WTC11 (cell line): ENCODE measurements at regions of chr20 and their contacts with region 1.

Region 1: DNA sequence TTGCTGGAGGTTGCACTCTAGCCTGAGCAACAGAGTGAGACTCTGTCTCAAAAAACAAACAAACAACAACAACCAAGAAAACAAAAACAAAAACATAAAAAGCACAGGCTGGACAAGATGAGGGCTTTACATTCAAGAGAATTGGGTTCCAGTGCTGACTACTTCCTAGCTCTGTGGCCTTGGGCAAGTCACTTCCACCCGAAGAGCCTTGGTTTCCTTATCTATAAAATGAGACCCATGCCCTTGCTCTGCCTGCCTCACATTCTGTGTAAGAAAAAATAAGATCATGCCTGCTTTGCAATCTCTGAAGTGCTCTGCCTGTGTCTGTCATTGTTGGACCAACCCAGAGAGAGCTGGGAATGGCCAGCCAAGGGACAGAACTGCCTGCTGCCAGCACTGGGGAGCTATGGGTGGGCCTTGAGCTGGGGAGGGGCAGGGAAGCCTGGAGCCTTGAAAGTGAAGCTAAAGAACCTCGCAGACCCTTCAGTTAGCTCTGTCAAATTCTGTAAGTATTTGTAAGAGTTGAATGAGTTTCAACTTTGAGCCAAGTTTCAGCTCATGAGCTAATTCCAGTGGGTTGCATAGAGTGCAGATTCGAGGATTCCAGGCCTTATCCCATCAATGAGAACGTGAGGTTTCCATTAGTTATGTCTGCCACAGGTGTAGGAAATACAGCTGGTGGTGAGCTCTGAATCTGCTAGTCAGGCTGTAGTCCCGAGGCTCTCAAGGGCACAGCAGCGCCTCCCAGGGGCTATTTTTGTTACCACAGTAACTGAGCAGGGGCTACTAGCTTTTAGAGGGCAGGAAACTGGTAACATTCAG is 93.2 kb downstream of the DLGAP4 start:
- DNase-seq: peak; percentile 96
- ATAC-seq: peak; percentile 96
- H3K4me3 Mint-ChIP-seq: no peak overlapping the region
- H3K27ac Mint-ChIP-seq: peak overlapping the region; percentile 69; the same call in 1 of the 2 replicates
- H3K4me1 Mint-ChIP-seq: peaks cover 18% of the 10 kb centered on the region
- H3K27me3 Mint-ChIP-seq: no peaks in the 10 kb centered on the region
- CTCF ChIP-seq: peak; percentile 63

Region 2: DNA sequence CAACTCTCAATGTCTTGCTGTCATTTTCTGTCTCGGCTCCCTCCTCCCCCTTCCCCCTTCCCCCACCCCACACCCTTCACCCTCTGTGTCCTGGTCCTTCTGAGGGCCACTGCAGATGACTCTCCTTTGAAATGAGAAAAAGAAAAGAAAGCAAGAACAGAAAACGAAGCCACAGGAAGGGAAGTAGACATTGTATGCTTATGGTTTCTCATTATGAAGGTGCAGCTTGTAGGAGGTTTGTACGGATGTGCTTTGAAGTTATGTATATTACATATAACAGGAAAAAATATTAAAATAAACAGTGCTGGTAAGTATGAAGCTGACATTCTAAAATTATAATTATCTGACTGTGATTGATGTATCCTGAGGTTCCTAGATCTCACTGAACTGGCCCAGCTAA is 169.3 kb before region 1 on chr20:
- CTCF ChIA-PET with region 1: interaction called, 16 read pairs
- POLR2A ChIA-PET with region 1: no interaction called
- DNase-seq: no peak
- ATAC-seq: no peak
- H3K4me3 Mint-ChIP-seq: no peak overlapping the region
- H3K27ac Mint-ChIP-seq: no peak overlapping the region
- H3K4me1 Mint-ChIP-seq: no peaks in the 10 kb centered on the region
- H3K27me3 Mint-ChIP-seq: no peaks in the 10 kb centered on the region
- CTCF ChIP-seq: no peak

Region 3: DNA sequence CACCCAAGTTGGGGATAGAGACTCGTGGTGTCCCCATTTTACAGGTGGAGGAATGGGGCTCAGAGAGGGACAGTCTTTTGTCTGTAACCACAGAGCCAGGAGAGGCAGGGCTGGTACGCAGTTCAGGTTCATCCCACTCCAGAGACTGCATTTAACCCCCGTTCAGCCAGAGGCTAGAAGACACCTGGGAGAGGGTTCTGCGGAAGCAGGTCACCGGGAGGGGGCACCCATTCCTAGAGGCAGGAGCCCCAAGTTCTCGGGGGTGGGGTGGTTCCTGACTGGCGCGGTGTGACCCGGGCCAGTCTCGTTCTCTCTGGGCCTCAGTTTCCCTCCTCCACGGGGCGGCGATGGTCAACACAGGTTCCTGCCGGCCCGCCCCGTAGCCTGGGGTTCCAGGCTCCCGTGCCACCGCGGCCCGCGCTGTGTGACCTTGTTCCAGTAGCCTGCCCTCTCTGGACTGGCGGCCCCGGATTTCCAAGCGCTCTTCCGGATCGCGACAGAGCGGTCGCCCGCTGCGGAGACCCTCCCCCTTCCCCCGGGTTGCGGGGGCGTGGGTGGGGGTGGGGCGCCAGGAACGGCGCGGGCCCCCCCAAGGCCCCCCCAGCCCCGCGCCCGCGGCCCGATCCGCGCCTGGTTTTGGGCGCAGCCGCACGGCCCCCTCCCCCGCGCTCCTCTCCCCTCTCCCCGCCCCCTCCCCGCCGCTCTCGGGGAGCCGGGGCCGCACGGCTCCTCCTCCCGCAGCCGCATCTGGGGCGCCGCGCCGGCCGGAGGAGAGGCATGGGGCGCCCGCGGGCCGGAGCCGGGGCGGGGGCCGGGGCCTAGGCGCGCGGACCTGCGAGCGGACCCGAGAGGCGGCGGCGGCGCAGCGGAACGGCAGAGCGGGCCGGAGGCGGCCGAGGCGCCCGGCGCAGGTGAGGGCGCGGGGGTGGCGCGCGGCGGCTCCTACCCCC is 93.5 kb before region 1 on chr20 and contains the start of gene DLGAP4:
- CTCF ChIA-PET with region 1: interaction called, 20 read pairs
- POLR2A ChIA-PET with region 1: no interaction called
- DNase-seq: peak; percentile 39
- ATAC-seq: peak; percentile 55
- H3K4me3 Mint-ChIP-seq: peak within 1 kb of the TSS; percentile 72
- H3K27ac Mint-ChIP-seq: no peak within 1 kb of the TSS
- H3K4me1 Mint-ChIP-seq: peaks cover 21% of the 10 kb centered on the region
- H3K27me3 Mint-ChIP-seq: peaks cover 45% of the 10 kb centered on the region
- CTCF ChIP-seq: no peak
- total RNA-seq, gene DLGAP4: 52.6 to 54.6 TPM (median 54.6 TPM) in 3 replicates

Region 4: GRCh38 chr20:36352843-36353553 is 46.4 kb before region 1 on chr20:
- CTCF ChIA-PET with region 1: interaction called, 11 read pairs
- POLR2A ChIA-PET with region 1: no interaction called
- DNase-seq: no peak
- ATAC-seq: 0 out of 2 replicates have a peak, but pooled peaks have one; percentile 26
- H3K4me3 Mint-ChIP-seq: no peak overlapping the region
- H3K27ac Mint-ChIP-seq: no peak overlapping the region
- H3K4me1 Mint-ChIP-seq: peaks cover 14% of the 10 kb centered on the region
- H3K27me3 Mint-ChIP-seq: no peaks in the 10 kb centered on the region
- CTCF ChIP-seq: no peak

Region 5: DNA sequence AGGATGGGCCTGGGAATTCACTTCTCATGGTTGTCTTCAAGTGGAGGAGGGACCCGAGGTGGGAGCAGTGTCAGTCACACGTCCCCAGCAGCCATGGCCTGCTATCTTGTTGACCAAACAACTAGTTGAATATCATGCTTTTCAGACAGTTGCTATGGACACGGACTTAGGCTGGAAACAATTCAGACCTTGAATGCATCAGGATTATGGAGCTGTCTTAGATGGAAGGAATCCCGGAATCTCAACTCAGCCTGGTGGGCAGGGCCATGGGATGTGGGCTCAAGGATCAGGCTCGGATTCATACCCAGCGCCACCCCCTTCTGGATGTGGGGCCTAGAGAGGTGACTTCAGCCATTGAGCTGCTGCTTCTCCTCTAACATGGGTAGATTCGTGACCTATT is 19.4 kb after region 1 on chr20:
- CTCF ChIA-PET with region 1: interaction called, 26 read pairs
- POLR2A ChIA-PET with region 1: no interaction called
- DNase-seq: no peak
- ATAC-seq: no peak
- H3K4me3 Mint-ChIP-seq: no peak overlapping the region
- H3K27ac Mint-ChIP-seq: no peak overlapping the region
- H3K4me1 Mint-ChIP-seq: no peaks in the 10 kb centered on the region
- H3K27me3 Mint-ChIP-seq: no peaks in the 10 kb centered on the region
- CTCF ChIP-seq: no peak

Region 6: GRCh38 chr20:36493013-36493800 is 93.8 kb after region 1 on chr20:
- CTCF ChIA-PET with region 1: interaction called, 12 read pairs
- POLR2A ChIA-PET with region 1: no interaction called
- DNase-seq: peak; percentile 56
- ATAC-seq: peak; percentile 72
- H3K4me3 Mint-ChIP-seq: no peak overlapping the region
- H3K27ac Mint-ChIP-seq: peak overlapping the region; percentile 75; the same call in 1 of the 2 replicates
- H3K4me1 Mint-ChIP-seq: peaks cover 9% of the 10 kb centered on the region
- H3K27me3 Mint-ChIP-seq: no peaks in the 10 kb centered on the region; the same call in 1 of the 2 replicates
- CTCF ChIP-seq: no peak; the same call in 1 of the 2 replicates

Region 7: DNA sequence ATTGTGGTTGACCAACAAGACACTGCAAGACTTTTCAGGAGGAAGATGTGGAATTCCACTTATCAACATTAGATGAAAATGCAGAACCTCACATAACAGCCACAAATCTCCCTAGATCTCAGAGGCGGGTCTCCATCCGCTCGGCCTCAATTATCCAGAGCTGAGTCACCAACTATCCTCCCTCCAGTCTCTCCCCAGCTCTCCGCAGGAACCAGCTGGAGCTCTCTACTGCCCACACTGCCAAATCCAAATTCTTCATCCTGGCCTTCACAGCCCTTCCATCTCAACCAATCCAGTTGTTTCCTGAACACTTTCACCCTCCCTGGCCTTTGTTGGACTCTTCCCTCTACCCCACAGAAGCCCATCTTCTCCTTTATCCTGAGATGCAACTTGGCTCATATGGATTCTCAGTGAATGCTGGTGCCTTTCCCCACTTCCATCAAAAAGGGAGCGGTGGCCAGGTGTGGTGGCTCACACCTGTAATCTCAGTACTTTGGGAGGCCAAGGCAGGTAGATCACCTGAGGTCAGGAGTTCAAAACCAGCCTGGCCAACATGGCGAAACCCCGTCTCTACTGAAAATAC is 170.6 kb after region 1 on chr20:
- CTCF ChIA-PET with region 1: no interaction called
- POLR2A ChIA-PET with region 1: no interaction called
- DNase-seq: no peak
- ATAC-seq: no peak
- H3K4me3 Mint-ChIP-seq: peak overlapping the region; percentile 80
- H3K27ac Mint-ChIP-seq: peak overlapping the region; percentile 92
- H3K4me1 Mint-ChIP-seq: peaks cover 42% of the 10 kb centered on the region
- H3K27me3 Mint-ChIP-seq: peaks cover 4% of the 10 kb centered on the region
- CTCF ChIP-seq: no peak